Posterior vena cava (tissue), 2 donors: ENCODE measurements at regions of chr10 and their contacts with region 1.

Region 1: DNA sequence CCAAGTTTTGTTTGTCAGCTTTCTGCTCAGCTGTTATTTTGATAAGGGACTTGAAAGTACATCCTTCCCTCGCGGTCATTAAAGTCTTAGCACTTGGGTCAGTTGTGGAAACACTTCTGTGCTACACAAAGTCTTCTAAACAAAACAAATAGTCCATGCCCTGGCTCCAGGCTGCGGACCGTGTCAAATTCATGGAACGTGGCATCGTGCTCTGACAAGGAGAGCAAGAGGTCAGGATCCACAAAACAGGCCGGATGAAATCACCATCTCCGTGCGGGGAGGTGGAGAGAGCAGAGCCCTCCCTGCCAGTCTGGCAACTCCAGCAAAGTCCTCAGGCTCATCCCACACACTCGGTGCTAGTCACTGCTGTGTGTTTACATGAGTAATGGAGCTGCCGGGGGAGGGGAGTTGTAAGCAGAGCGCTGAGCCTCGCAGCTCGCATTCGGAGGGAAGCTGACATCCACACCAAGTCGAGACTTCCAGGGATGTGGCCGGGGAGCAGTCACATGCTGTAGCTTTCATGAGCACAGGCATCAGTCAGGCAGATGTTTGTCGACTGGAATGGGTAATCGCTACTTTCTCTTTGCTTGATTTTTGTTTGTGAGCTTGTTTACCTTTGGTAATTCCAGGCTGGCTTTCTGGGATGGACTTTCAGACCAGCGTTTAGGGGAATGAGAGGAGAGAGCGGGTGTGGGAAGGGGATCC is 147.6 kb downstream of the ARID5B start:
- DNase-seq: peak; percentile 96

Region 2: DNA sequence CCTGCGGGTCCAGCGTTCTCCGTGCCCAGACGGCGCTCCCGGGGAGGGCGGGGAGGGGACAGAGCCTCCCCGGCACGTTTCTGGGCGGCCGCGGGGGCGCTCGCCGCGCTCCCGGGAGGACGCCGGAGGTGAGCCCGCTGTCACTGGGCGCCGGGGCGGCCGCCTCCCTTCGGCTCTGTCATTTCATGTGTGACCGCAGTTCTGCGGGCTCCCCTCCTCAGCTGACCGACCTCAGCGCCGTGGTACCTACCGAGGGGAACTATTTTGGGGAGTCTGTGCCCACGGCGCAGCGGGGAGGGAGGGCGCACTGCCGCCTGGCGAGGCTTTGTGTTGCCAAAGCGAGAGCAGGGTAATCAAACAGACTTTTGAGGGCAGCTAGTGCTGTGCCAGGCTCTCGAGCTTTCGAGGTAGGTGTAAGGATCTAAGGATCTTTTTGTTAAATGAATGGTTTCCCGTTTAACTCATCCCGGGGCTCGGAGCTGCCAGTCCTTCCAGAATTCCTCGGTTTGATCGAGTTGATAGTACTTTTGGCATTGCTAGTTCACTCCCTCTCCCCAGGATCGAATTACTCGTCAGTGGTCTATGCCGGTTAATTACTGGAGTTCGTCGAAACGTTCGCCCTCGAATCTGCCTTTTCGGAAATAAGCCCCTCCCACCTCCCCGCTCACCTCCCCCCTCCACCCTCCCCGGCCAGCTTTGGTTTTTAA is 145.7 kb before region 1 on chr10:
- intact Hi-C with region 1: loop called in 1 of 2 experiments (anchors 5 kb)
- DNase-seq: peak; percentile 88

Region 3: GRCh38 chr10:62011558-62011957 is 37.5 kb before region 1 on chr10:
- intact Hi-C with region 1: no loop called
- DNase-seq: no peak

Region 4: DNA sequence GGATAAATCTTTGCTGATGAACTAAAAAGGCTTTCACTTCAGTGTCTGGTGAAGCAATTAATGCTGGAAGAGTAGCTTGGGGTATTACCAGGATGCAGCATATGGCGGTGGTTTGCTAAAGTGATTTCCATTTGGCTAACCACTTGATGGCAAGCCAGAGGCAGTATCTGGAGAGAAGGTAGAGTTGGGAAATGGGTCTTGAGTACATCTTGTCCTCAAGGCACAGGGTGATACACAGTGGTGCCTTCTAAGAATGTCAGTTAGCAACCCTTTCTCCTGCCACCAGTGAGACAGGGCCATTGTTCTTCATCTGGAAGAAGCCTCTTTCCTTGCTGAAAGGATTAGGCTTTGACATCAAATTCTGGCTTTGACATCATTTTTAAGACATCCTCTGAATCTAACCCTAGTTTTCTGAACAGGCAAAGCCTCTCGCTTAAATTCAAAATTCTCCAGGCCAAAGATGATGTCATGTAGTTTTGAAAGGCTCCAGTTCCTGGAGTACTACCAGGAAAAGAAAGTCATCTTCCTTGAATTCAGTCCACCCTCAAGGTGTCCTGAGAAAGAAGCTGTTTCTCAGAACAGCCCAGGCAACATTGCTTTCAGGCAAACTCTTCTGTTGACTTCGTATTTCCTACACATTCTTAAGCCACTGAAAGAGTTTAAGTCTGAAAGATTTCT is 14.9 kb after region 1 on chr10:
- intact Hi-C with region 1: no loop called
- DNase-seq: no peak

Region 5: GRCh38 chr10:62095181-62096071 is 46.4 kb after region 1 on chr10:
- intact Hi-C with region 1: loop called in 1 of 2 experiments (anchors 10 kb)
- DNase-seq: no peak

Region 6: DNA sequence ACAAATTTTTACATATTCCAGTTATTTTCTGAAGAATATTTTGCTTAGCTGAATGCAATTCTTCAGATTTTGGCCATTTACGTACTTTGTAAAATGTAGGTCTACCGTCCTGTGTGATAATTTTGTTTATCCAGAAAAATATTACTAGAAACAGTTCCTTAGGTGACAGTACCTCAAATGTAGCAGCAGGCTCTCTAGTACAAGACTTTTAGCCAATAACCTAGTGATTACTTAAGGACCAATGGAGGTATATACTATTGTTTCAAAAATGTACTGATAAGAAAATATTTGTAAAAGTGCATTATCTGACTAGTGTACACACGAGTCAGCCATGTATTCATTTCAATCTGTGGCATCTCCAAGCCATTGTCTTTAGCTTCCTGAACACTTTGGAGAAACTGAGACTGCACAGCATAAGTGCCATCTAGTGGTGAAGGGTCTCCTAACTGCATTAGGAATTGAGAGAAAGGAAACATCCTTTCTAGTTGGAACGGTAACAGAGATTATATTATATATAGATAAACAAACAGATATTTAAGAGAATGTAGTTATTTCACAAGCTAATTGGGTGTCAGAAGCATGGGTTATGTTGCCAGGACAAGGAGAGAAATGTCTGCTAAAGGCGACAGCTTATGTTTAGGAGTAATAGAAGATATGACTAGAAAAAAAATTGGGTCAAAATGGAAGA is 195.9 kb after region 1 on chr10:
- intact Hi-C with region 1: loop called in 1 of 2 experiments (anchors 10 kb)
- DNase-seq: no peak

Region 7: DNA sequence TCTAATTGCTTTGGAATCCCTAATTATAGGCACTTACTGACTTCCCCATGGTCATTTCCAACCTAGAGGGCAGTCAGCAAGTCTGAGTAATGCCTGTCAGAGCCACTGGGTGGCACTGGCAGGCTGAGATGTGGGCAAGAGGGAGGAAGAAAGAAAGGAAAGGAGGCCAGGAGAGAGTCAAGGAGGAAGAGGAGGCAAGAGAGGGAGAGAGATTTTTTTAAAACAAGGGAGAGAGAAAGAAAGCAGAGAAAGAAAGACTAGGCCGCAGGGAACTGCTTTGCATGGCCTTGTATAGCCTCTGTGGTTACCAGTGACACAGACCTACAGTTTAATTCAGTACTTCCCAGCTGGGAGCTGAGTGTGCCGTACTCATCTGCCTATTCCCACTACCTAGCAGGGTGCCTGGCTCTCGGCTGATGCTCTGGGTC is 545.0 kb after region 1 on chr10:
- intact Hi-C with region 1: no loop called
- DNase-seq: peak; percentile 86